Prostate gland (tissue), 2 donors: ENCODE measurements at regions of chr2 and their contacts with region 1.

Region 1: DNA sequence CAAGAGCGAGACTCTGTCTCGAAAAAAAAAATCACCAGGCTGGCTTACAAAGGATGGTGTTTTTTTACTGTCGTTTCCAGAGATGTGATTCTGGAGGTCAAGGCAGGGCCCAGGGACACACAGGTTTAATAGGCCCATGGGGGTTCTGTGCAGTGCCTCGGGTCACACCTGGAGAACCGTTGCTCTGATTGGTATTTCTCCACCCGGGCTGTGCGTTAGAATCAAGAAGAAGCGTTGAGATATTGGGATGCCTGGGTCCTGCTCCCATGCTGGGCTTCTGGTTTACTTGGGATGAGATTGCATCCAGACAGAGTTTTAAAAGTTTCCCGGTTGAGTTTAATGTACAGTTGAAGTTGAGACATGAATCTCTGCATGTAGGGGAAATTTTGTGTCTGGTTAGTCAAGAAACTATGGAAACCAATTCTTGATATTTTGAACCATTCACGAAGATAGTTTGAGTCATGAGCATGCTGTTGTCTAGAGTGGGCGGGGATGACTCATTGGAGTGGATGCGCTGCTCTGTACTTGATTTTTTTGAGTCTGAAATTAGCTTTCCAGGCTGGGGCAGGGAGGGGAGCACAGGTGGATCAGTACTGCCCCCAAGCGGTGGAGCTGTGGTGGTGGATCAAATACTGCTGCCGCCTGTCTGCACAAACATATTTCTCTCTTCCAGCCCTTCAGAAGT is 50.1 kb downstream of the GREB1 start:
- DNase-seq: peak; percentile 50
- H3K4me3 ChIP-seq: no peak overlapping the region
- H3K27ac ChIP-seq: peak overlapping the region; percentile 49 to 50
- H3K4me1 ChIP-seq: no peaks in the 10 kb centered on the region
- H3K27me3 ChIP-seq: no peaks in the 10 kb centered on the region
- CTCF ChIP-seq: peak; percentile 72 to 87 (median 79)
- POLR2A ChIP-seq: no peak

Region 2: GRCh38 chr2:11129598-11130449 is 454.2 kb before region 1 on chr2:
- intact Hi-C with region 1: loop called (anchors 10 kb)
- DNase-seq: peak; percentile 76
- H3K4me3 ChIP-seq: peak overlapping the region; percentile 25 to 32
- H3K27ac ChIP-seq: peak overlapping the region; percentile 52 to 60
- H3K4me1 ChIP-seq: peaks cover 7% of the 10 kb centered on the region
- H3K27me3 ChIP-seq: no peaks in the 10 kb centered on the region
- CTCF ChIP-seq: peak in 3 of 4 experiments; percentile 30 to 62 (median 57)
- POLR2A ChIP-seq: peak; percentile 24

Region 3: GRCh38 chr2:11357428-11357972 is 226.5 kb before region 1 on chr2:
- intact Hi-C with region 1: loop called (anchors 10 kb)
- DNase-seq: no peak
- H3K4me3 ChIP-seq: no peak overlapping the region
- H3K27ac ChIP-seq: no peak overlapping the region
- H3K4me1 ChIP-seq: no peaks in the 10 kb centered on the region
- H3K27me3 ChIP-seq: no peaks in the 10 kb centered on the region
- CTCF ChIP-seq: no peak
- POLR2A ChIP-seq: no peak

Region 4: GRCh38 chr2:11398747-11399437 is 185.1 kb before region 1 on chr2:
- intact Hi-C with region 1: no loop called
- DNase-seq: no peak
- H3K4me3 ChIP-seq: no peak overlapping the region
- H3K27ac ChIP-seq: no peak overlapping the region
- H3K4me1 ChIP-seq: no peaks in the 10 kb centered on the region
- H3K27me3 ChIP-seq: no peaks in the 10 kb centered on the region
- CTCF ChIP-seq: no peak
- POLR2A ChIP-seq: no peak

Region 5: DNA sequence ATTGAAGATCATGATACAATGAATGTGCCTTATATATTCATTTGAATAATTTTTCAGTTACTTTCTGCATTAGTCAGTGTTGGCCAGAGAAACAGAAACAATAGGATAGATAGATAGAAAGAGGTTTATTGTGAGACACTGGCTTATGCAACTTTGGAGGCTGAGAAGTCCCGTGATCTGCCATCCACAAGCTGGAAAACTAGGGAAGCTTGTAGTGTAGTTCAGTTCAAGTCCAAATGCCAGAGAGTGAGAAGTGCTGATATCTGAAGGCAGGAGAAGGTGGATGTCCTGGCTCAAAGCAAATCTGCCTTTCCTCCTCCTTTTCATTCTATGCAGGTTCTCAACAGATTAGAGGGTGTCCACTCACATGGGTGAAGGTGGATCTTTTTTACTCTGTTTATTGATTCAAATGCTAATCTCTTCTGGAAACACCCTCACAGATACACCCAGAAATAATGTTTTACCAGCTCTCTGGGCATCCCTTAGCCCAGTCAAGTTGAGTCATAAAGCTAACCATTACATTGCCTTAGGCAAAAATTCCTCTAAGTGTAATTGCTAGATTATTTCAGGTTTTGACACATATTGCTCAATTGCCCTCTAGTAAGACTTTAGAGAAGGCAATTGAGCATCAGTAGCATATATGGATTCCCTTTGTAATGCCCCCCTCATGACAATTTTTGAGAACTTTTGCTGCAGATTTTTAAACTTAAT is 503.8 kb after region 1 on chr2:
- intact Hi-C with region 1: no loop called
- DNase-seq: no peak
- H3K4me3 ChIP-seq: no peak overlapping the region
- H3K27ac ChIP-seq: no peak overlapping the region
- H3K4me1 ChIP-seq: no peaks in the 10 kb centered on the region
- H3K27me3 ChIP-seq: no peaks in the 10 kb centered on the region
- CTCF ChIP-seq: no peak
- POLR2A ChIP-seq: no peak